ENCODE measurements at regions of chr2 and their contacts with region 1.

Region 1: GRCh38 chr2:36355151-36355889 is at the start of gene CRIM1:
- DNase-seq: peak in 1 of 2 donors; percentile 93
- H3K4me3 ChIP-seq: peak within 1 kb of the TSS; percentile 85 to 97
- H3K27ac ChIP-seq: peak within 1 kb of the TSS; percentile 86
- H3K4me1 ChIP-seq: peaks cover 39% of the 10 kb centered on the region
- H3K27me3 ChIP-seq: no peaks in the 10 kb centered on the region
- CTCF ChIP-seq: no peak
- POLR2A ChIP-seq: peak in 1 of 2 donors; percentile 95
- total RNA-seq, gene CRIM1: 60.4 TPM

Region 2: DNA sequence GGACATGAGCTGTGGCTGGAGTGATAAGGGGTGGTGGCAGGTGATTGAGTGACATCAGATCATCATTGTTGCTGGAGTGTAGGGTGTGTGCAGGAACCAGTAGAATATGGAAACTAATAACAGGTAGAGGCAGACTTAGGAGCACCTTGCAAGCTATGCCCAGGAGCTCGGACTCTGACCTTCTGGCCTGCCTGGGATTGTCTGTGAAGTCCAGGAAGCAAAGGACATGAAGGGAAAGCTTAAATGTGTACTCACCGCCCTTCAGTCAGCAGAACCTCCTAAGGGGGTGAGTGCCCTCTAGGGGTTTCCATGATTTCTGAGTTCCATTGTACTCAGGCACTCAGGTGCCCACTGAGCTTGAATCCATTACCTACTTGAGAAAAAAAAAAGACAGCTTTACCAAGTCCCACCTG is 104.4 kb after region 1 on chr2:
- intact Hi-C with region 1: loop called (anchors 10 kb)
- DNase-seq: no peak
- H3K4me3 ChIP-seq: no peak overlapping the region
- H3K27ac ChIP-seq: no peak overlapping the region
- H3K4me1 ChIP-seq: peaks cover 37% of the 10 kb centered on the region
- H3K27me3 ChIP-seq: no peaks in the 10 kb centered on the region
- CTCF ChIP-seq: no peak
- POLR2A ChIP-seq: no peak

Region 3: DNA sequence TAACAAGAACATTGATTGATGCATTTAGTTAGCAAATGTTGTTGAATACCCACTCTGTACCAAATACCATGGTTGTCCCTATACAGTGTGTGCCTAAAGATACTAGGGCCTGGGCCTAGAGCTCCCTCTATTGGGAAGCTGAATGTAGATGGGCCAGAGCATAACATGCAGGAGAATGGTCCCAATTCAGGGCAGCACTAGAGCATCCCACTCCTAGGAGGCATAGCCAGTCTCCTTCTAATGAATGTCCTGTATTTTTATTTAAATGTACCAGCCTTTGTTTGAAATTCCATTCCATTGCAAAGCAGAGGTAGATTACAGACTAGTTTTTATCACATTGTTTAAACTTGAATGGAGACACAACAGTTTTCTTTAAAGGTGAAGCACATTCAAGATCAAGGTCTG is 152.1 kb after region 1 on chr2:
- intact Hi-C with region 1: loop called (anchors 10 kb)
- DNase-seq: no peak
- H3K4me3 ChIP-seq: no peak overlapping the region
- H3K27ac ChIP-seq: no peak overlapping the region
- H3K4me1 ChIP-seq: no peaks in the 10 kb centered on the region
- H3K27me3 ChIP-seq: no peaks in the 10 kb centered on the region
- CTCF ChIP-seq: peak in 1 of 3 experiments; percentile 47
- POLR2A ChIP-seq: no peak

Region 4: GRCh38 chr2:36663851-36664695 is 308.8 kb after region 1 on chr2:
- intact Hi-C with region 1: loop called (anchors 5 kb)
- DNase-seq: no peak
- H3K4me3 ChIP-seq: no peak overlapping the region
- H3K27ac ChIP-seq: no peak overlapping the region
- H3K4me1 ChIP-seq: no peaks in the 10 kb centered on the region
- H3K27me3 ChIP-seq: no peaks in the 10 kb centered on the region
- CTCF ChIP-seq: peak; percentile 28 to 80 (median 64)
- POLR2A ChIP-seq: no peak

Region 5: GRCh38 chr2:36785179-36785795 is 430.0 kb after region 1 on chr2:
- intact Hi-C with region 1: loop called (anchors 10 kb)
- DNase-seq: no peak
- H3K4me3 ChIP-seq: no peak overlapping the region
- H3K27ac ChIP-seq: no peak overlapping the region
- H3K4me1 ChIP-seq: peaks cover 3% of the 10 kb centered on the region
- H3K27me3 ChIP-seq: no peaks in the 10 kb centered on the region
- CTCF ChIP-seq: peak; percentile 67 to 88 (median 87)
- POLR2A ChIP-seq: no peak

Measured in vagina (tissue), 2 donors.